Activated CD8-positive, alpha-beta T cell treated with anti-CD3 and anti-CD28 coated beads for 36 hours (primary cell): ENCODE measurements at regions of chr19 and their contacts with region 1.

Region 1: DNA sequence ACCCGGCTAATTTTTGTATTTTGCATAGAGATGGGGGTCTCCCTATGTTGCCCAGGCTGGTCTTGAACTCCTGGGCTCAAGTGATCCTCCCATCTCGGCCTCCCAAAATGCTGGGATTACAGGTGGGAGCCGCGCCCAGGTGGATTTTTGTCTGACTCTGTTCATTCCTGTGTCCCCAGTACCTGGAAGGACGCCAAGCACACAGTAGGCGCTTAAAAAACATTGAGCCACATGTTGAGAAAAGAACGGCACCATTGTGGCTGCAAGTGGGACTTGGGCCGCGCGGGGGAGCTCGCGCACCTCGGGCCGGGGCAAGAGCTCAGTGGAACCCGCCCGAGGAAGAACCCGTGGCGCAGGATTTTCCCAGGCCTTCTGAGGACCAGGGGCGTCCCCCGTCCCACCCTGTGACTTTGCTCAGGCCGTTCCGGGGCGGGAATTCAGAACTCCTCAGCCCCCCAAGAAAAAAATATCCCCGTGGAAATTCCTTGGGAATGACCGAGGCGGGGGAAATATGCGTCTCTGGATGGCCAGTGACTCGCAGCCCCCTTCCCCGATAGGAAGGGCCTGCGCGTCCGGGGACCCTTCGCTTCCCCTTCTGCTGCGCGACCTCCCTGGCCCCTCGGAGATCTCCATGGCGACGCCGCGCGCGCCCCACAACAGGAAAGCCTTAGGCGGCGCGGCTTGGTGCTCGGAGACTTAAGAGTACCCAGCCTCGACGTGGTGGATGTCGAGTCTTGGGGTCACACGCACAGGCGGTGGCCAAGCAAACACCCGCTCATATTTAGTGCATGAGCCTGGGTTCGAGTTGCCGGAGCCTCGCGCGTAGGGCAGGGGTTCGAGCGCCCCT is 1.4 kb upstream of the ICAM1 start:
- DNase-seq: peak; percentile 95
- ATAC-seq: peak; percentile 72
- H3K4me3 Mint-ChIP-seq: peak overlapping the region; percentile 85
- H3K27ac Mint-ChIP-seq: peak overlapping the region; percentile 89
- H3K4me1 Mint-ChIP-seq: peaks cover 20% of the 10 kb centered on the region
- H3K27me3 Mint-ChIP-seq: no peaks in the 10 kb centered on the region
- CTCF ChIP-seq: peak; percentile 97

Region 2: DNA sequence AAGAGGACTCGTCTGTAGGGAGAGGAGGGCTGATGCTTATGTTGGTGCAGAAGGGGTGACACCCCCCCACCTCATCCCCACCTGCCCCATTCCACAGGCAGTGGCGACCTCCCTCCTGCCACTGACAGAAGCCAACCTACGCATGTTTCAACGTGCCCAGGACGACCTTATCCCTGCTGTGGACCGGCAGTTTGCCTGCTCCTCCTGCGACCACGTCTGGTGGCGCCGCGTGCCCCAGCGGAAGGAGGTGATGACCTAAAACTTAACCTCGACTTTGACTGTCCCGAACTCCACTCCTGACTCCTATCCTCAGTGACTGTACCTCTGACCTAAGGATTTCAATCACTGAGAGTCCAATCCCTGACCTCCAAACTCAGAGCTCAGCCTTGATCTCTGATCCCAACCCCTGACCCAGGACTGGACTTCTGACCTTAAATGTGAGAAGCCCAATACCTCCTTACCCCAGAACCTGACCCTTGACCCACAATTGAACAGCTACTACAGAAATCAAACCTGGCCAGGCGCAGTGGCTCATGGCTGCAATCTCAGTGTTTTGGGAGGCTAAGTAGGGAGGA is 179.7 kb before region 1 on chr19:
- CTCF ChIA-PET with region 1: no interaction called
- POLR2A ChIA-PET with region 1: no interaction called
- intact Hi-C with region 1: no loop called
- DNase-seq: no peak
- ATAC-seq: no peak
- H3K4me3 Mint-ChIP-seq: no peak overlapping the region
- H3K27ac Mint-ChIP-seq: peak overlapping the region; percentile 19
- H3K4me1 Mint-ChIP-seq: peaks cover 13% of the 10 kb centered on the region
- H3K27me3 Mint-ChIP-seq: no peaks in the 10 kb centered on the region
- CTCF ChIP-seq: no peak

Region 3: GRCh38 chr19:10201176-10201575 is 68.4 kb before region 1 on chr19:
- CTCF ChIA-PET with region 1: no interaction called
- POLR2A ChIA-PET with region 1: no interaction called
- intact Hi-C with region 1: no loop called
- DNase-seq: no peak
- ATAC-seq: no peak
- H3K4me3 Mint-ChIP-seq: no peak overlapping the region
- H3K27ac Mint-ChIP-seq: no peak overlapping the region
- H3K4me1 Mint-ChIP-seq: peaks cover 11% of the 10 kb centered on the region
- H3K27me3 Mint-ChIP-seq: no peaks in the 10 kb centered on the region
- CTCF ChIP-seq: no peak

Region 4: DNA sequence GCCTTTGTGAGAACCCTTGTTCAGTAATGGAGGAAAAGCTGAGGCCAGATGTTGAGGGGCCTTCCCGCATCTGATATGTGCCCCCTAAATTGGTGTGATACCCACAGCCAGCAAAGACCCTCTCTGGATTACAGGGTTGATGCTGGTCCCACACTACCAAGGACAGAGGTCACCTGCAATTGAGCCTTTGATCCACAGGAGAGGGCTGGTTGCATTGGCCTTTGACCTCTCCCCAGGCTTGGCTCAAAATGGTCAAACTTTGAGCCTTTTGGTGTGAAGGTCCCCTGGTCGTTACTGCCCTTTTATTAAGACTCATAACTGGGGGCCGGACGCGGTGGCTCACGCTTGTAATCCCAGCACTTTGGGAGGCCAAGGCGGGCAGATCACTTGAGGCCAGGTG is 25.9 kb before region 1 on chr19:
- CTCF ChIA-PET with region 1: no interaction called
- POLR2A ChIA-PET with region 1: no interaction called
- intact Hi-C with region 1: no loop called
- DNase-seq: no peak
- ATAC-seq: no peak
- H3K4me3 Mint-ChIP-seq: no peak overlapping the region
- H3K27ac Mint-ChIP-seq: no peak overlapping the region
- H3K4me1 Mint-ChIP-seq: peaks cover 8% of the 10 kb centered on the region
- H3K27me3 Mint-ChIP-seq: no peaks in the 10 kb centered on the region
- CTCF ChIP-seq: no peak

Region 5: DNA sequence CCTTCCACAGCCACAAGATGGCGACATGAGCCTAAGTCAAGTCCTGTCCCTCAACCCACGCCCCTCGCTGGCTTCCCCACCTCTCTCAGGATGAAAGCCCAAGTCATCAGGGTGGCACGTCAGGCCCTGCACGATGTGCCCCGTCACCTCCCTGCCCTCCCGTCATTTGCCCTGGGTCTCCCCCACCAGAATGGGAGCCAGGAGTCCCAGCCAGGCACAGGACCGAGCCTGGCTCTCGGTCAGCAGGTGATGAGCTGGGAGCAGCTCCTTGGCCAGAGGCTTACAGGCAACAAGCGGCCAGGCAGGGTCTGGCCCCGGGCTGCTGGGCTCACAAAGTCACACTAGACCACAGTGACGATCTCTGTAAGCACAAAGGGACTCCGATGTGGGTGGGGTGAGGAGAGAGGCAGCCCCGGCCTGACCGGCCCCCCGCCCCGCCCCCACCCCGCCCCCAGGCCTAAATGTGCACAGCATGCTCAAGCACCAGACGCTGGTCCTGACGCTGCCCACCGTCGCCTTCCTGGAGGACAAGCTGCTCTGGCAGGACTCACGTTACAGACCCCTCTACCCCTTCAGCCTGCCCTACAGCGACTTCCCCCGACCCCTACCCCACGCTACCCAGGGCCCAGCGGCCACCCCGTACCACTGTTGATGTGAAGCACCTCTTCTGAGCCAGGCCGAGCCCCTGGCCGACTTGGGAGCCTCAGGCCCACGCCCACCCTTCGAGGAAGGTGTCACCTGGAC is 10.2 kb before region 1 on chr19:
- CTCF ChIA-PET with region 1: interaction called, 75 read pairs
- POLR2A ChIA-PET with region 1: interaction called, 42 read pairs
- intact Hi-C with region 1: no loop called
- DNase-seq: peak; percentile 100
- ATAC-seq: peak; percentile 80
- H3K4me3 Mint-ChIP-seq: peak overlapping the region; percentile 24
- H3K27ac Mint-ChIP-seq: peak overlapping the region; percentile 92
- H3K4me1 Mint-ChIP-seq: peaks cover 33% of the 10 kb centered on the region
- H3K27me3 Mint-ChIP-seq: no peaks in the 10 kb centered on the region
- CTCF ChIP-seq: peak; percentile 77

Region 6: GRCh38 chr19:10286803-10287737 is 17.5 kb after region 1 on chr19 and contains the start of gene ICAM4:
- CTCF ChIA-PET with region 1: interaction called, 32 read pairs
- POLR2A ChIA-PET with region 1: interaction called, 107 read pairs
- intact Hi-C with region 1: no loop called
- DNase-seq: peak; percentile 71
- ATAC-seq: peak; percentile 32
- H3K4me3 Mint-ChIP-seq: peak within 1 kb of the TSS; percentile 19
- H3K27ac Mint-ChIP-seq: peak within 1 kb of the TSS; percentile 48
- H3K4me1 Mint-ChIP-seq: peaks cover 61% of the 10 kb centered on the region
- H3K27me3 Mint-ChIP-seq: peaks cover 35% of the 10 kb centered on the region
- CTCF ChIP-seq: no peak
- total RNA-seq, gene ICAM4: 0.36 to 0.54 TPM

Region 7: DNA sequence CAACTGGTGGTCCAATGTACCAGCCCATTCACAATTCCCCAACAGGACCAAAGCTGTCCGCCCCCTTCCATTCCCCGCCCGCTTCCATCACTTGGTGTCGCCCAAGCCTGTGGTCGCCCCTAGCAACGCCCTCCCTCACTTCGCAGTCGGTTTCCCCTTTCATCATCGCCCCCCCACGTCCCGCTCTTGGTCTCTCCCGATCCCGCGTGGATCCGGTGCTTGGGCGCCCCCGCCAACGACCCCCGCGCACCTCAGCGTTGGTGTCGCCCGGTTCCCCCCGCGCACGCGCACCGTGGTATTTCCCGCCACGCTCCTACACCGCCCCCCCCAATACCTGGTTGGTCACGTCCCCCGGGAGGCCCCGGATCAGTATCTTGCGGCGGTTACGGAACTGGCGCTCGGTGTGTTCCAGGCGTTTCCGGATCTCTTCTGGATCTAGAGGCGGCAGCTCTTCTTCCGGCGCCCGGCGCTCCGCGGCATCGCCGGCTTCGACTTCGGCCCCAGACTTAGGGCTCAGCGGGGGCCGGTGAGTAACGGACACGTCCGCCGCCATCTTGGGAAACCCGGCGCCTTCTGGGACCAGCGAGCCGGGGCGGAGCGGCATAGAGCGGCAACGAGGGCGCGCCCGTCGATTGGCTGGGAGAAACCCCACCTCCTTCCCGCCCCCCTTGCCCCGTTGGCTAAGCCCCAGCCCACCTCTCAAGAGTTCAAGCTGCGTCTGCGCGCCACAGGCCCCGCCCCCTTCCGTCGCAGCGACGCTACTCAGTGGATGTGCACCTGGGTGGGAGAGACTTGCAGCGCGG is 63.6 kb after region 1 on chr19 and contains the start of gene RAVER1:
- CTCF ChIA-PET with region 1: interaction called, 6 read pairs
- POLR2A ChIA-PET with region 1: interaction called, 30 read pairs
- intact Hi-C with region 1: no loop called
- DNase-seq: peak; percentile 99
- ATAC-seq: peak; percentile 97
- H3K4me3 Mint-ChIP-seq: peak within 1 kb of the TSS; percentile 97
- H3K27ac Mint-ChIP-seq: peak within 1 kb of the TSS; percentile 98
- H3K4me1 Mint-ChIP-seq: peaks cover 38% of the 10 kb centered on the region
- H3K27me3 Mint-ChIP-seq: no peaks in the 10 kb centered on the region
- CTCF ChIP-seq: no peak
- total RNA-seq, gene RAVER1: 105 to 111 TPM

Region 8: GRCh38 chr19:10403137-10404021 is 133.8 kb after region 1 on chr19 and contains the start of gene CDC37:
- CTCF ChIA-PET with region 1: interaction called, 9 read pairs
- POLR2A ChIA-PET with region 1: interaction called, 15 read pairs
- intact Hi-C with region 1: no loop called
- DNase-seq: peak; percentile 99
- ATAC-seq: peak; percentile 74
- H3K4me3 Mint-ChIP-seq: peak within 1 kb of the TSS; percentile 95
- H3K27ac Mint-ChIP-seq: peak within 1 kb of the TSS; percentile 78
- H3K4me1 Mint-ChIP-seq: peaks cover 63% of the 10 kb centered on the region
- H3K27me3 Mint-ChIP-seq: no peaks in the 10 kb centered on the region
- CTCF ChIP-seq: no peak
- total RNA-seq, gene CDC37: 236 to 238 TPM